ENCODE measurements at regions of chr1 and their contacts with region 1.

Region 1: DNA sequence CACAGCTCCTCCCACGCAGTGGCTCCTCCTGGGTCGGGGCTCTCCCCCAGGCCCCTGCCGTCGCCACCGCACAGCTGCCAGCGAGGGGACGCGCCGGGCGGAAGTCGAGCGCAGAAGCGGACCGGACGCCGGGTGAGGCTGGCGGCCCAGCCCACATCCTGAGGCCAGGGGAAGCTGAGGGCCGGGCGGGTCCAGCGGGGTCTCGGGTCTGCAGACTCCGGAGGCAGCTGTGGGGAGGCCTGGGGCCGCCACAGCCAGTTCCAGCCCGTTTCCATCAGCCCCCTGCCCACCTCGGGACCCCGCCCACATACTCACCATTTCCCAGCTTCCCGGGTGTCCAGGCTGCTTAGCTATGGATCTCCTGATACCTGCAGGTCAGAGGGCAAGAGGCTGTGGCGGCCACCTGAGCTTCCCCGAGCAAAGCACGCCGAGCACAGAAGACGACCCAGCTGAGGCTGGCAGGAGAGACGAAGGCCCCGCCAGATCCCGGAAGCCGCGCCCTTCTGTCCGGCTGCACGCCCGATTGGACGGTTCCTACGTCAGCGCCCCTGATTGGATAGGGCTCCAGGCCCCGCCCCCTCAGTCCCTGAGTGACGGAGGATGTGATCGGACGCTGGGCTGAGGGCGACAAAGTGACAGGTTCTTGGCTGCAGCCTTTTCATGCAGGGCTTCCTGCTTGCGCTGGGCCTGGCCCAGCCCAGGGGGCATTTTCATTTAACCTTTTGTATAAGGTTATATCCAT is 38.7 kb upstream of the ZNF124 start:
- DNase-seq: peak; percentile 99
- ATAC-seq: peak; percentile 100

Region 2: GRCh38 chr1:247172996-247173395 is 37.6 kb before region 1 on chr1:
- intact Hi-C with region 1: loop called (anchors 5 kb)
- DNase-seq: no peak
- ATAC-seq: no peak

Region 3: GRCh38 chr1:247316590-247317197 is 106.1 kb after region 1 on chr1:
- intact Hi-C with region 1: no loop called
- DNase-seq: no peak
- ATAC-seq: no peak

Region 4: GRCh38 chr1:247331172-247331991 is 120.8 kb after region 1 on chr1 and contains the start of gene ZNF496:
- intact Hi-C with region 1: loop called (anchors 5 kb)
- DNase-seq: peak; percentile 87
- ATAC-seq: peak; percentile 83
- total RNA-seq, gene ZNF496: 10.5 TPM

Measured in Right ventricle myocardium inferior (tissue), 1 donor.